Transverse colon (tissue), 4 donors: ENCODE measurements at regions of chr11 and their contacts with region 1.

Region 1: DNA sequence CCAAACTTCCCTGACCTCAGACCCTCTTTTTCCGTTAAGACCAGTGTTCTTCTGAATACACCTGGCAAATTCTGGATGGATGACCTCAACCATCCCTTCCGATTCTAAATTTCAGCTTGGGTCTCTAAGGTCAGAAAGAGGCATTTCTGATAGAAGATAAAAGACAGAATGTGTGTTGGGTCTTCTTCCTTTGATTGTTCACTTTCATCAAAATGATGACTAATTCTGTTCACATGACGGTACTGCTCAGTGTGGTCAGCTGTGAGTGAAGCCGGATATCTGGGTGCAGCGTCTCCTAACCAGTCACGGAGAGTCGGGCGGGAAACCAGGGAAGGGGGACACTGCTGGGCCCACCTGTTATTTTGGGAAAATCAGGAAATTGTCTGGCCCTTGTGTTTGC is 151.6 kb upstream of the NAV2 start:
- DNase-seq: no peak
- H3K4me3 ChIP-seq: no peak overlapping the region
- H3K27ac ChIP-seq: no peak overlapping the region
- H3K4me1 ChIP-seq: peaks cover 0 to 12% (median 7%) of the 10 kb centered on the region in 4 donors
- H3K27me3 ChIP-seq: no peaks in the 10 kb centered on the region
- CTCF ChIP-seq: no peak
- EP300 ChIP-seq: no peak
- POLR2A ChIP-seq: no peak

Region 2: GRCh38 chr11:19903620-19904069 is 342.6 kb after region 1 on chr11:
- in situ Hi-C with region 1: loop called (anchors 5 to 10 kb)
- intact Hi-C with region 1: loop called (anchors 5 kb)
- DNase-seq: peak; percentile 82
- H3K4me3 ChIP-seq: no peak overlapping the region
- H3K27ac ChIP-seq: no peak overlapping the region
- H3K4me1 ChIP-seq: peaks cover 0 to 4% (median 0%) of the 10 kb centered on the region in 4 donors
- H3K27me3 ChIP-seq: no peaks in the 10 kb centered on the region
- CTCF ChIP-seq: peak; percentile 71 to 79 (median 78)
- EP300 ChIP-seq: no peak
- POLR2A ChIP-seq: no peak